Endothelial cell of umbilical vein (primary cell): ENCODE measurements at regions of chr12 and their contacts with region 1.

Region 1: DNA sequence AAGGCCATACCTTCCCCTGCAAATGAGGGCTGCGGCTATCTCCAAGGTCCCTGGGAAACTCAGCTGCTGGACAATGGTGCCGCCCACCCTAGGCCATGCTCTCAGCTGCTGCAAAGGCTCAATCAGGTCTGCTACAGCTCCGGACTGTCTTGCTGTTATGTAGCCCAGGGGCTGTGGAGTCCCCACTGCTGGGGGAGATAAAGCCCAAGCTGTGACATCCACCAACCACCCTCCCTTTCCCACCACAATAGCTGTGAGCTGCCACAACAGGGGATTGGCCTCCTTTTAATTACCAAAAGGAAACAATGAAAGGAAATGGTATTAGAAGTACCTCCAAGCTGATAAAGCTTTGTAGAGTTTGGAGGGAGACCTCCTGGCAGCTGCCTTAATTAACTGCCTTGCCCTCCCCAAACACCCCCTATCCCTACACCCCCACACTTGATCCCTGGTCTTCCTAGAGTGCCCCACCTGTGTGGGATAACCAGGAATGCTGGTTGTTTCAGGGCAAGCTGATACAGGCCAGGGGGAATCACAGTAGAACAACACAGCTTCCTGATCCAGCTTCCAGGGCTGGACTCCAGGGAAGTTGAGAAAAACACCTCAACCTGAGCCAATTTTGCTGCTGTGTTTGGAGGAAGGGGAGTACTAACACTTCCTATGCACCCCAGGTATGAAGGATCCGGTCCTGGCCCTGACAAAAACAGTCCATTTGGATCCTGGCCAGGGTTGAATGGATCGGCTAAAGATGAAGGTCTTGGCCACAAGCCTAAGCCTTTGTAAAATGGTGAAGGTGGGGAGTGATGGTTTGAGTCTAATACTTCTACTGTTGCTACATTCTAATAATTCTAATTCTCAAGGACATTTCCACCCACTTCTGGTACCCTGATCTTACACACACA is at the start of gene VWF:
- DNase-seq: peak; percentile 90
- H3K4me3 ChIP-seq: peak within 1 kb of the TSS; percentile 17 to 93 (median 79)
- H3K27ac ChIP-seq: peak within 1 kb of the TSS; percentile 100
- H3K4me1 ChIP-seq: peaks cover 45% of the 10 kb centered on the region
- H3K27me3 ChIP-seq: no peaks in the 10 kb centered on the region
- CTCF ChIP-seq: no peak
- POLR2A ChIP-seq: peak; percentile 96
- total RNA-seq, gene VWF: 1,882 and 2,328 TPM in 2 replicates

Region 2: GRCh38 chr12:6078378-6079096 is 46.1 kb before region 1 on chr12:
- CTCF ChIA-PET with region 1: no interaction called
- POLR2A ChIA-PET with region 1: no interaction called
- dilution Hi-C with region 1: no loop called
- intact Hi-C with region 1: no loop called
- DNase-seq: no peak
- H3K4me3 ChIP-seq: no peak overlapping the region
- H3K27ac ChIP-seq: no peak overlapping the region
- H3K4me1 ChIP-seq: peaks cover 66% of the 10 kb centered on the region
- H3K27me3 ChIP-seq: no peaks in the 10 kb centered on the region
- CTCF ChIP-seq: no peak
- POLR2A ChIP-seq: no peak

Region 3: DNA sequence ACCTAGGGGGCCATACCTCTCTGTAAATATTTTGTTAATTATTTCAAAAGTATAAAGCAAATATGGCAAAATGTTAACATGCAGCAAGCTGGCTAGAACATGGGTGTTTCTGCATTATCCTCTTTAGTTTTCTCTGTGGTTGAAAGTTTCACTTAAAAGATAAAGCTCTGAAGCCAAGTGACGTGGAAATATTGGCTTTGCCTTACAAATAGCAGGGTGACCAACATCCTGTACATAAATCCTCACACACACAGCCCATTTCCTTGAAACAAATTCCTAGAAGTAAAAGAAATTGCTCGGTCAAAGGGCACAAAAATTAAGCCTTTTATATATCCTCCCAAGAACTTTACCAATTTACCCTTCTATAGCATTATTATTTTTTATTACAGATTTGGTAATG is 10.4 kb after region 1 on chr12:
- CTCF ChIA-PET with region 1: interaction called, 8 read pairs
- POLR2A ChIA-PET with region 1: interaction called, 6 read pairs
- dilution Hi-C with region 1: no loop called
- intact Hi-C with region 1: loop called (anchors 1 kb)
- DNase-seq: peak; percentile 77
- H3K4me3 ChIP-seq: no peak overlapping the region
- H3K27ac ChIP-seq: peak overlapping the region; percentile 52
- H3K4me1 ChIP-seq: peaks cover 23% of the 10 kb centered on the region
- H3K27me3 ChIP-seq: no peaks in the 10 kb centered on the region
- CTCF ChIP-seq: no peak
- POLR2A ChIP-seq: no peak

Region 4: DNA sequence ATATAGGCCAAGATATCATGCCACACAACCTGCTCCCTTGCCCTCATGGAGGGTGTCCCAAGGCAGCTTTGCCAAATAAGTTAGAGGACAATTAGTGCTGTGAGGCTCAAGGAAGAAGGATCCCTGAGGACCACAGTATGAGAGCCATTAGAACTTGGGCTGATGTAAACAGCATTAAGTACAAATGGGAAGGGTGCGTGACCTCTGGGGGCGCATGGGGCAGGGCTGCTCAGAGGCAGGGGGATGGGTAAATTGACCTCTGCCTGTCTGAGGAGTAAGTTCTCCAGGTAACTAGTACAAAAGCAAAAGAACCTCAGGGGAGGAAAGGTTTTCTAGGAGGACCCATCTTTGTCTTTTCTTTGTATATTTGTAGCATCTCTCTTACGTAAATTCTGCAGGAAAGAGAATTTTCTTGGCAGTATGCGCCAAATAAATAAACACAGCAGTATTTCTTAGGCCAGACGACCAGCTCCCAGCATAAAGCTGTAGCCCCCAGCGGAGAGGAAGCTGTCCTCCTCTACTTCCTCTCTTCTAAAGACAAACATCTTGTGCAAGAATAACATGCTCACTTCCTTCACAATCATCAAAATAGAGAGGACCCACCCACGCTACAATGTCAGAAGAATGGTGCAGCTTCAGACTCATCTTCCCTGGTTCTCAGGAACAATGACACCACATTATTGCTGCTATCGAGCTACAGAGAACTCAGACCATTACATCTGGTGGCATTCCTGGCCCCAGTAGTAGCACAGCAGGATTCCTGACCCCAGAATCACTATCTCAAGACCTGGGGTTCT is 16.2 kb after region 1 on chr12:
- CTCF ChIA-PET with region 1: interaction called, 8 read pairs
- POLR2A ChIA-PET with region 1: interaction called, 5 read pairs
- dilution Hi-C with region 1: no loop called
- intact Hi-C with region 1: loop called (anchors 1 kb)
- DNase-seq: peak; percentile 85
- H3K4me3 ChIP-seq: no peak overlapping the region
- H3K27ac ChIP-seq: peak overlapping the region; percentile 86
- H3K4me1 ChIP-seq: peaks cover 42% of the 10 kb centered on the region
- H3K27me3 ChIP-seq: no peaks in the 10 kb centered on the region
- CTCF ChIP-seq: no peak
- POLR2A ChIP-seq: peak; percentile 25

Region 5: DNA sequence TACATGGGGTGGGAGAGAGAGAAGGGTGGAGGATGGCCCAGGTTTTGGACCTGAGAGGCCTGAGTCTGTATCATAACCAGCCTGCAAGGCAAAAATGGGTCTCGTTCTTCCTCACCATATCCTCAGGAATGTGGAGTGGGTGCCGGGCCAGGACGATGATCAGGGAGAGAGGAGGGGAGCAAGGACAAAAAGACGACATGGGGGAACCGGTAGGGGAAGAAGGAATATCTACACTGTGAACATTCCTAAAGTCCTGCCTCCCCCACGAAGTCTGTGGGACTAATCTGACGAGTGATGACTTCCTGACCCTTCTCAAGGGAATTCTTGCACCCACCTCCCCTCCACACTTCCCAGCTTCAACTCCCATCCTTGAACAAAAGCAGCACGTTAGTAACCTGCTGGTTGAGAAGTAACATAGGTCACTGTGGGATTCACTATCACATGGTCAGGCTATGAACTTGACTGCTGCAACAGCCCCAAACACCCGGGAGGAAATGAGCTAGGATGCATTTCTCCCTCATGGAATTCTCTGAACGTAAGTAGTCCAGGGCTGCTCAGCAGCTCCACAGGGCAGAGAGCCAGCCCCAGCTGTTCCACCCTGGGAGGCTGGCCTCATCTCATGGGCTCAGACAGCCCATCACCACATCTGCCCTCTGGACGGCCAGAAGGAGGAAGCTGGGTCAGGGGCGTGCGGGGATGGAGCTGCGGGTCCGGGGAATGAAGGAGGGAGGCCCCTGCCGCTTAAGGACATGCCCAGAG is 36.6 kb after region 1 on chr12:
- CTCF ChIA-PET with region 1: interaction called, 15 read pairs
- POLR2A ChIA-PET with region 1: interaction called, 9 read pairs
- dilution Hi-C with region 1: no loop called
- intact Hi-C with region 1: no loop called
- DNase-seq: peak; percentile 88
- H3K4me3 ChIP-seq: no peak overlapping the region
- H3K27ac ChIP-seq: peak overlapping the region; percentile 94
- H3K4me1 ChIP-seq: peaks cover 37% of the 10 kb centered on the region
- H3K27me3 ChIP-seq: no peaks in the 10 kb centered on the region
- CTCF ChIP-seq: no peak
- POLR2A ChIP-seq: peak; percentile 52